ENCODE measurements at regions of chr12 and their contacts with region 1.

Region 1: GRCh38 chr12:810671-811415 is 58.5 kb downstream of the WNK1 start:
- DNase-seq: no peak
- H3K4me3 ChIP-seq: no peak overlapping the region
- H3K27ac ChIP-seq: no peak overlapping the region
- H3K4me1 ChIP-seq: peaks cover 0 to 20% (median 9%) of the 10 kb centered on the region in 4 experiments
- H3K27me3 ChIP-seq: no peaks in the 10 kb centered on the region

Region 2: GRCh38 chr12:569803-570434 is 240.9 kb before region 1 on chr12:
- CTCF ChIA-PET with region 1: interaction called, 23 read pairs
- POLR2A ChIA-PET with region 1: no interaction called
- DNase-seq: peak; percentile 78 to 84 (median 84)
- H3K4me3 ChIP-seq: peak overlapping the region; percentile 45 to 82 (median 67)
- H3K27ac ChIP-seq: peak overlapping the region in 1 of 2 experiments; percentile 14
- H3K4me1 ChIP-seq: peaks cover 0 to 32% (median 9%) of the 10 kb centered on the region in 4 experiments
- H3K27me3 ChIP-seq: no peaks in the 10 kb centered on the region

Region 3: GRCh38 chr12:622416-622815 is 188.4 kb before region 1 on chr12:
- CTCF ChIA-PET with region 1: interaction called, 68 read pairs
- POLR2A ChIA-PET with region 1: no interaction called
- DNase-seq: peak; percentile 59 to 76 (median 68)
- H3K4me3 ChIP-seq: no peak overlapping the region
- H3K27ac ChIP-seq: peak overlapping the region in 1 of 2 experiments; percentile 2
- H3K4me1 ChIP-seq: peaks cover 11 to 42% (median 31%) of the 10 kb centered on the region in 4 experiments
- H3K27me3 ChIP-seq: no peaks in the 10 kb centered on the region

Region 4: DNA sequence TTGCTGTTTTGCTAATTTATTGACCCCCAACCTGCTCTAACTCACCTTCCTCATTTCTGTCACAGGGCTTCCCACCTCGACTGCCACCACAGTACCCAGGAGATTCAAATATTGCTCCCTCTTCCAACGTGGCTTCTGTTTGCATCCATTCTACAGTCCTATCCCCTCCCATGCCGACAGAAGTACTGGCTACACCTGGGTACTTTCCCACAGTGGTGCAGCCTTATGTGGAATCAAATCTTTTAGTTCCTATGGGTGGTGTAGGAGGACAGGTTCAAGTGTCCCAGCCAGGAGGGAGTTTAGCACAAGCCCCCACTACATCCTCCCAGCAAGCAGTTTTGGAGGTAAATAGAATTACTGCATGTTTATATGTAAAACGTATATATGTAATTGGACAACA is 69.8 kb after region 1 on chr12:
- CTCF ChIA-PET with region 1: no interaction called
- POLR2A ChIA-PET with region 1: no interaction called
- DNase-seq: no peak
- H3K4me3 ChIP-seq: no peak overlapping the region
- H3K27ac ChIP-seq: no peak overlapping the region
- H3K4me1 ChIP-seq: no peaks in the 10 kb centered on the region
- H3K27me3 ChIP-seq: no peaks in the 10 kb centered on the region